Activated CD4-positive, alpha-beta T cell treated with anti-CD3 and anti-CD28 coated beads for 36 hours (primary cell): ENCODE measurements at regions of chr14 and their contacts with region 1.

Region 1: DNA sequence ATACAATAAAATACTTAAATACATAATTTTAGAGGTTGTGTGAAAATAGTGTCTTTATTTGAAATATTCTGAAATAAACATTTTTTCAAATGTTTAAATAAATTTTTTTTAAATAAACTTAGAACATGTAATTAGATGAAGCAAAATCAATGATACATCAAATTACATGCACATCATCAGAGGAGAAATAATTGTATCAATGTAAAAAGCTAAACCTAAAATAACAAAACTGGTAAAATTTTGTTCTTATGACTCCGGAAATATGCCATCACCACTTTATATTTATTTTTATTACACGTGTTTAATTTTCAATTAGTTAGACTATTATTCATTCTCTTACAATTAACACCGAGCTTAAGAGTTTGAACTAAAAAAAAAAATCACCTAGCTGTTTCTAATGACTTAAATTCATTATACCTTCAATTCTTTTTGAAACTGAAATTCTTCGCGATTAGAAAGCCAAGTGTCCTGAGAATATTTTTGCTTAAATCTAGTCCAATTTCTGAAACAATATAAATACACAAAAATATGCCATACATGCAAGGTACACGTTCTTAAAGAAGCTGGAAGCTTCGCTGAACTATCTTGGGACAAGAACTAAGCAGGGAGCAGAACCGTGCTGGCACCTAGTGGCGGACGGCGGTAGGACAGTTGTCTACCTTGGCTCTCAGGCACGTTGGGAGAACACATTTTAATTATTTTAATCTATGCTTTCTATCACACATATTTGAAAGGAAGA is 230.5 kb downstream of the SLC25A21 start:
- DNase-seq: peak; percentile 78
- ATAC-seq: peak; percentile 58
- H3K4me3 Mint-ChIP-seq: no peak overlapping the region
- H3K27ac Mint-ChIP-seq: no peak overlapping the region
- H3K4me1 Mint-ChIP-seq: no peaks in the 10 kb centered on the region
- H3K27me3 Mint-ChIP-seq: no peaks in the 10 kb centered on the region

Region 2: DNA sequence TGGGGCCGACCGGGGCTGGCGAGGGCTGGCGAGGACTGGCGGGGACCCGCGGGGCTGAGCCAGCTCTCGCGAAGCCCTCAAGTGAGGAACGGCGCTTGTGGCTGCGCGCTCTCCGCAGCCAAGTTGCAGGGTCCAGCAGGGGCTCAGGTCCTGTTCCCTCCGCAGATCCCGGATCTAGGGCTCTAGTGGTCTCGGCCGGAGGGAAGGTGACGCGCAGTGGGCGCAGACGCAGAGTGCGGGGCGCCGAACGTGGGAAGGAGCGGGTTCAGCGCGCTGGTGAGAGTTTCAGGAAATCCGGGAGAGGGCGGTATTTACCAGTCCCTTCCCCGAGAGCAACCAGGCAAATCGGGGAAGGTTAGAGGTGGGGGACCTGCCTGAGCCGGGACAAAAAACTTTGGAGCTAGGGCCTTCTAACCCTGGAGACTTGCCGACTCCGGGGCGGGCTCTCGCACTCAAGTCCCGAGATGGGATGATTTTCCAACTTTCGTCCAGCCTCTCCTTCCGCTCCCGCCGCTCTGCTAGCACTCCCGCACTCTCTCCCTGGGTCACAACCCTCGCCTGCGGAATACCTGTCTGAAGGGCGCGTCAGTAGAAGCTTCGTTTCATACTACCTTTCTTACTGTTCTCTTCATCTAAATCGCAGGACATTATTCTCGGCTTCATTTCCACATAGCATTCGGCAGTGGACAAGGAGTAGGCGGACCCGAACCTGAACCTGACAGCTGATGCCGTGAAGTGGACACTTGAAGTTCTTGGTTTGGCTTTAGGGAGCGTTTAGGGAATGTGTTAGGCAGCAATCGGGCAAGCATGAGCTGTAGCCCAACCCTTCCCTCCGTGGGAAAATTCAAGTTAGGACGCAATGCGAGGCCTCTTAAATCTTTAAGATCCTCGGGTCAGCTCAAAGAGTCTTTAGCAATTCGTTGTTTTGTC is 293.9 kb before region 1 on chr14:
- CTCF ChIA-PET with region 1: interaction called, 3 read pairs
- POLR2A ChIA-PET with region 1: no interaction called
- intact Hi-C with region 1: loop called in 1 of 2 experiments (anchors 1 kb)
- DNase-seq: peak; percentile 19
- ATAC-seq: no peak
- H3K4me3 Mint-ChIP-seq: no peak overlapping the region
- H3K27ac Mint-ChIP-seq: no peak overlapping the region
- H3K4me1 Mint-ChIP-seq: no peaks in the 10 kb centered on the region
- H3K27me3 Mint-ChIP-seq: peaks cover 50% of the 10 kb centered on the region

Region 3: DNA sequence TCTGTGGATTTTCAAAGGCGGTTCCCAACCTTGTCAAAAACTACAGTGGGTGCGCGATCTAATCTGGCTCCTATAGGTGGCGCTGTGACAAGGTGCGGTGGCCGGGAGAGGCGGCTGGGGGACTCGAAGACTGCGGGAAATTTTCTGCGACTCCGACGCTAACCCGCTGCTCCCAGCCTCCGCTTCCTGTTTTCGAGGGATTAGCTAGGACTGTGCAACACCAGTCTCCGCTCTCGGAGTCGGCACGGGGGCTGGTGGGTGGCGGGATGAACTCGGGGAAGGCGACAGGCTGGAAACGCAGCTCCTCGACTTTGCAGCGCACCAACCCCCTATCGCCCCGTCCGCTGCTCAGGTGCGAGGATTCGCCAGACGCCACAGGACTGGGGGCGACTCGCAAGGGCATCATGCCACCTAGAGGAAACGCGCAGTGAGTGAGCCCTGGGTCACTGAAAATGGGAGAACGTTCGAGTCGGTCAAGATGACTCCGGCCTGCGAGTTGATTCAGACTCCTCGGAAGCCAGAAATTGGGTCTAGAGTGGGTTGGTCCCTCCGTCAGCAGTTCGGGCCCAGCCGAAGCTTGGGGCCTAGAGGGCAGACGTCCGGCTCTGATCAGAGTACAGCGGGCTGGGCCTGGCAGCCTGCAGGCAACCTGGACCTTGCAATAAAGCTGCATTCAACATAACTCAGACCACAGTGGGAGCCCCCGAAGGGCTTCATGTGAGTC is 285.8 kb before region 1 on chr14:
- CTCF ChIA-PET with region 1: no interaction called
- POLR2A ChIA-PET with region 1: no interaction called
- intact Hi-C with region 1: loop called (anchors 2 to 5 kb)
- DNase-seq: peak; percentile 69
- ATAC-seq: peak; percentile 58
- H3K4me3 Mint-ChIP-seq: no peak overlapping the region
- H3K27ac Mint-ChIP-seq: no peak overlapping the region
- H3K4me1 Mint-ChIP-seq: peaks cover 26% of the 10 kb centered on the region
- H3K27me3 Mint-ChIP-seq: peaks cover 80% of the 10 kb centered on the region

Region 4: GRCh38 chr14:36955967-36956366 is 14.0 kb after region 1 on chr14:
- CTCF ChIA-PET with region 1: interaction called, 10 read pairs
- POLR2A ChIA-PET with region 1: no interaction called
- intact Hi-C with region 1: no loop called
- DNase-seq: no peak
- ATAC-seq: no peak
- H3K4me3 Mint-ChIP-seq: no peak overlapping the region
- H3K27ac Mint-ChIP-seq: no peak overlapping the region
- H3K4me1 Mint-ChIP-seq: no peaks in the 10 kb centered on the region
- H3K27me3 Mint-ChIP-seq: no peaks in the 10 kb centered on the region